Posterior vena cava (tissue), 2 donors: ENCODE measurements at regions of chr15 and their contacts with region 1.

Region 1: DNA sequence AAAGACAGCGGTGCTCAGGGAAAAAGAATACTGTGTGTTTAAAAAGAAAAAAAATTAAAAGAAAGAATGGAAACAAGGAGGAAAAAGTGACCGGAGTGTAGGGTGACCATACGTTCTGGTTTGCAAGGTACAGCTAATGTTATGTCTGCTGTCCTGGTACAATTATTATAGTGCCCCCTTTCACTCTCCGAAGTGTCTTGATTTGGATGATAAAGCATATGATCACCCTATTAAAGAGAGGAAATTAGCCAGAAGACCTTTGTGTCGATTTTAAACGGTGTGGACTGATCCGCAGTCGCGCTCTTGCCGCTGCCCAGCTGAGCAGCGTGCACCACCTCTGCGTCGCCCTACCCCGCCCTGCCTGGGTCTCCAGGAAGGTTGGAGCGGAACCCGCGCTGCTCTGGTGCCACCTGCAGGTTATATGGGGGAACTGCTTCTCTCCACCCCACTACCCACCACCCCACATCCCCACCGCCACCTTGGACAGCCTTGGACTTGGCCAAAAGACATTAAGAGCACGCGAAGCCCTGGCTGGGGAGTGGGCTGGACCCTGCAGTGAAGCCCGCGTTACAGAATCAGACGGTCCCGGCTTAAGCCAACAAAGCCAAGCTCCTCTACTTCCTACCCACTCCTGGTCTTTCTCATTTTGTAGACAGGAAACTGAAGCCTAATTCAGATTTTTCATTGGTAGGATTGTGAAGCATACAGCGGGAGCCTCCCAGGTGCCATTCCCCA is 41.2 kb upstream of the UBE2Q2 start:
- DNase-seq: peak; percentile 95

Region 2: GRCh38 chr15:75639709-75640482 is 162.1 kb before region 1 on chr15 and contains the start of gene IMP3:
- intact Hi-C with region 1: no loop called
- DNase-seq: peak; percentile 98
- total RNA-seq, gene IMP3: 29.0 to 34.1 TPM

Region 3: DNA sequence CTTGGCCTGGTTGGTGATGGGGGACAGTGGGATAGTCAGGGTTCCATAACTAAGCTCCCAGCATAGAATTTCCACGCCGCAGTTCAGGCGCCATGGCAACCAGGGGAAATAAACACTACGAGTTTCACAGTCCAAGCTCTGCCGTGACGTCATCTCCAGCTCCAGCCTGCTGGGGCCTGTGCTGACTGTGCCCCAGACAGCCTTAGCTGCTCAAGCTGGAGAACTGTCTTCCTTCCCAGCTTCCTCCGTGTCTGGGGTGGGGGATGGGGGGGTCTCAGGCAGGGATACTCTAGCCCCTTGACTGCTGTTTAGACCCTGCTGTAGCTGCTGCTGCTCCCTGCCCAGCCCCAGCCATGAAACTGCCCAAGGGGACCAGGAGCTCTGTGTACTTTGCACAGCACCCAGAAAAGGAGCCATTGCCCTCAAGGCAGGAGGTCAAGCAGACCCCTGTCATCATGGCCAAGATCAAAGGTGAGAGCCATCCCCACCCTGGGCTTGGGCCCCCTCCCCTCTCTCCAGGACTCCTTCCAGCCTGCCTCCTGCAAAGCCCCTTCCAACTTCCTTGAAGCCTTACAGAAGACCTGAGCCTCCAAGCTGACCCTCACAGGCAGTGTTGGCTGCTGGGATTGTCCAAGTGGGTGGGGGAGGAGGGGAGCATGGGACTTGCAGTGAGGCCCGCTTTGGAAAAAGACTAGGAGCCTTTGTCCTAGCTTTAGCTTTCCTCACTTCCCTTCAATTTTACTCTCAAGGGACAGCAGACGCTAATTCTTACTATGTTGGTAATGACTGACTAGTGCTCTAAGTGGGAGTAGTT is 78.0 kb before region 1 on chr15:
- intact Hi-C with region 1: loop called in 1 of 2 experiments (anchors 10 kb)
- DNase-seq: peak; percentile 98

Region 4: GRCh38 chr15:75861750-75862402 is 59.9 kb after region 1 on chr15:
- intact Hi-C with region 1: no loop called
- DNase-seq: no peak